ENCODE measurements at regions of chr3 and their contacts with region 1.

Region 1: DNA sequence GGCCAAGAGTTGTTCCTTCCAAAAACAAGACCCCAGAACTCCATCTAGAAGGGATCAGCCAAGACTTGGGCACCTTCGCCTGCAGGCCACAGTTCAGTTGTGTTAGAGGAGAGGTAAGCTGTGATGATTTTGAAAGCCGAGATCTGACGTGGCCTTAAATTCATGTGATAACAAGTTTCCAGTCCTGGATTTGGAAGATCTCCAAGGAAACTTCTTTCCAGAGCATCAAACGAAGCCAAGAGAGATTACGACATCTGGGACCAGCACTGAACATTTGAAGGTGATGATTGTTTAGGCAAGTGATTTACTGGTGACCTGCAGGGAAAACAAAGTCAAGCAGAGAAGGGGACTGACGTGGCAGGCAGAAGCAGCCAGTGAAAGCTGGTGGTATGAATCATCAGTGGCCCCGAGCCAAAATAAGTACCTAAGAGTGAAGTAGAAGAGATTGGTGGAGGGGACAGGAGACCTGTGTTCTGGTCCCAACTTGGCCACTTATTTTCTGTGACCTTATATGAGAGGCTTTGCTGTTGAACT is 339.0 kb upstream of the PROK2 start:
- H3K4me3 Mint-ChIP-seq: no peak overlapping the region
- H3K27ac Mint-ChIP-seq: no peak overlapping the region
- H3K4me1 Mint-ChIP-seq: peaks cover 58% of the 10 kb centered on the region
- H3K27me3 Mint-ChIP-seq: peaks cover 33% of the 10 kb centered on the region

Region 2: DNA sequence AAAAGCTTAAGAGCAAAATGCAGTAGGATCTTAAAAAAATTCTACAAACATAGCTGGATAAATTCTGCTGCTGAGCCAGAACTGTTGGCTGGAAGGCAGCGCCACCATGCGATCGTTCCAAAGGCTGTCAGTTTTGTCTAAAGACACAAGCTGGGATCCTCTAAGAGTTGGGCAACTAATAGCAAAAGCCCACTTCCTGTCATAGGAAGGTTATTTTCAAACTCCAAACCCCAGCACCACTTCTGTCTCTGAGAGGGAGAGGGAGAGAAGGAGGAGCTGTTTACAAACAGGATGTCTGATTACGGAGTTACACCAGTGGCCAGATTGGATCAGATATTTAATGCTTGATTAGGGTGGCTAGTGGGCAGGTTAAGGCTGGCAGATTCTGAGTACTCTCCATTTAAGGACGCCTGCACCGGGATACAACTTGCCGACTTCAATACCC is 442.7 kb before region 1 on chr3:
- intact Hi-C with region 1: no loop called
- H3K4me3 Mint-ChIP-seq: no peak overlapping the region
- H3K27ac Mint-ChIP-seq: no peak overlapping the region
- H3K4me1 Mint-ChIP-seq: peaks cover 26% of the 10 kb centered on the region
- H3K27me3 Mint-ChIP-seq: no peaks in the 10 kb centered on the region

Region 3: GRCh38 chr3:71875461-71875947 is 248.5 kb before region 1 on chr3:
- intact Hi-C with region 1: loop called (anchors 10 kb)
- H3K4me3 Mint-ChIP-seq: no peak overlapping the region
- H3K27ac Mint-ChIP-seq: no peak overlapping the region
- H3K4me1 Mint-ChIP-seq: peaks cover 7% of the 10 kb centered on the region
- H3K27me3 Mint-ChIP-seq: peaks cover 85% of the 10 kb centered on the region

Region 4: GRCh38 chr3:72163809-72164634 is 40.0 kb after region 1 on chr3:
- intact Hi-C with region 1: no loop called
- H3K4me3 Mint-ChIP-seq: no peak overlapping the region
- H3K27ac Mint-ChIP-seq: no peak overlapping the region
- H3K4me1 Mint-ChIP-seq: peaks cover 26% of the 10 kb centered on the region
- H3K27me3 Mint-ChIP-seq: peaks cover 27% of the 10 kb centered on the region

Region 5: DNA sequence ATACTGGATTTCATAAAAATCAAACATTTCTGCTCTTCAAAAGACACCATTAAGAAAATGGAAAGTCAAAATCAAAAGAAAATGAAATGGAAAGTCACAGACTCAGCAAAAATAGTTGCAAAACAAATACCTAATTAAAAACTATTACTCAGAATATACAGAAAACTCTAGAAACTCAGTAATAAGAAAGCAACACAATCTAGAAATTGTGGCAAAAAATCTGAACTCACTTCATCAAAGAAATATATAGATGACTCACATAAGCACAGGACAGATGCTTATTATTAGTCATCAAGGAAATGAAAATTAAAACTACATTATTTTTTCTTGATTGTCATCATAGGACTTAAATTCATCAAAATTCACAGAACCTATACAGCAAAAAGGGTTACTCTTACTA is 294.3 kb after region 1 on chr3:
- intact Hi-C with region 1: no loop called
- H3K4me3 Mint-ChIP-seq: no peak overlapping the region
- H3K27ac Mint-ChIP-seq: no peak overlapping the region
- H3K4me1 Mint-ChIP-seq: peaks cover 44% of the 10 kb centered on the region
- H3K27me3 Mint-ChIP-seq: no peaks in the 10 kb centered on the region

Measured in dendritic cell treated with granulocyte-macrophage colony-stimulating factor and Interleukin-4, amounts not matched to agents 40 ng/mL and 50 ng/mL, for 4 days (primary cell).